BJ (cell line): ENCODE measurements at regions of chr11 and their contacts with region 1.

Region 1: DNA sequence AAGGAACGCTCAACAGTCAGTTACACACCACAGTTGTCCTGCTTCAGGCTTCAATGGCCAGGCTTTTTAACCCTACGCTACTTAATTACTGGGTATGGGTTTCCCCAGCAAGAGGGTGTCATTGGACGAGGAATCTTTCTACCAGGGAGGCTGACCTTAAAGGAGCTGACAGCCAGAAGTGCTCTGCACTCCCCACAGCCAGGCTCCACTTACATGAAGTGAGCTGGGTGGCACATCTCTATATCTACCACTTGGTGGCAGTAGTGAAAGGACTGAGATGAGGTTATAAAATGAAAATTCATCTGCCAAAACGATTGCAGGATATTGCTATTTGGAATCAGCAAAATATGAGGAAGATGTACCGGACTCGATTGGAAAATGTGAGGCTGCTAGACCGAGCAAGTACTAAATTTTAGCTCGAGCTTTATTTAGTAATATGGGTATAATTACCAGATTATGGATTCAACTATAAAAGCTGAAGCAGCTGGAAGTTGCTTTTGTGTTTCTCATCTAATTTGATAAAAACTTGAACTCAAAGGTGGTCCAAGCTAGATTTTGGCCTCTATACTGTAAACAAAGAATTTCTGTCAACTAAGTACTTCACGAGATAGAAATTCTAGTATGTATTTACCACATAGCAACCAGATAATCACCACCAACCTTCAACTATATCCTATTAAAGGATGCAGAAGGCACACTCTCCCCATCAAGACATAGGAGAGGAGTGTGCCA is 53.9 kb upstream of the CEP126 start:
- DNase-seq: no peak
- H3K4me3 ChIP-seq: no peak overlapping the region
- H3K27me3 ChIP-seq: no peaks in the 10 kb centered on the region
- CTCF ChIP-seq: peak; percentile 84

Region 2: DNA sequence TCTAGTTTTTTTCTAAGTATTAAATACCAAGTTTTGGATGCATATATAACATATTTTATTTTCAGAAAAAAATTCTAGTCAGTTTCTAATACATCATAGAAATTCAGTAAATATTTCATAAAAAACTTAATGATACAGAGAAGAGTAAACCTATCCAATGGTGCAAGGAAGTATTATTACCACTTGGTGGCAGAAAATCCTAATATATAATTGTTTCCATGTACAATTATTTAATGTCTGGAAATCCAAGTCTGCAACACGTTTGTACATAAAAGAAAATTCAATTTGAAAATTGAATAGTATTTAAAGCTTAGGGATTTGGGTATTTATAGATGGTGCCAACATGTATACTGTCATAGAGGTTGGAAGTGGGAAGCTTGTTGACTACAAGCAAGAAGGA is 404.1 kb before region 1 on chr11:
- CTCF ChIA-PET with region 1: interaction called, 13 read pairs
- POLR2A ChIA-PET with region 1: no interaction called
- DNase-seq: no peak
- H3K4me3 ChIP-seq: no peak overlapping the region
- H3K27me3 ChIP-seq: no peaks in the 10 kb centered on the region
- CTCF ChIP-seq: peak; percentile 33; the same call in 1 of the 2 replicates

Region 3: DNA sequence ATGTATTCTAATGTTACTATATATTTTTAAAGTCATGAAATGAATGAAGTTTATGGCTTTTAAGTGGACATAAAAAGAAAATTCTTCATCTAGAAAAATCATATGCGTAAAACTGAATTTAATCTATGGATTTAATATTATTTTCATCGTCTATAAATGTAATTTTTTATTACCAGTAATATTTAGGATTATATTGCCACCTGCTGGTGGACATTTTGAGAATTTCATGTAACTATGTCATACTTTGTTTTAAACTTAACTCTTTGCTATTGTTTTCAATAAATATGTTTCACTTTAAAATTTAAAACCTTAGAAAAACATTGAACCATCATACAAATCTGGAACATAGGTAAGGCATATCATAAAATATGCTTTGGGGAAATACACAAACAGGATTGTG is 12.6 kb before region 1 on chr11:
- CTCF ChIA-PET with region 1: interaction called, 14 read pairs
- POLR2A ChIA-PET with region 1: no interaction called
- DNase-seq: no peak
- H3K4me3 ChIP-seq: no peak overlapping the region
- H3K27me3 ChIP-seq: no peaks in the 10 kb centered on the region
- CTCF ChIP-seq: peak; percentile 22; the same call in 1 of the 2 replicates

Region 4: DNA sequence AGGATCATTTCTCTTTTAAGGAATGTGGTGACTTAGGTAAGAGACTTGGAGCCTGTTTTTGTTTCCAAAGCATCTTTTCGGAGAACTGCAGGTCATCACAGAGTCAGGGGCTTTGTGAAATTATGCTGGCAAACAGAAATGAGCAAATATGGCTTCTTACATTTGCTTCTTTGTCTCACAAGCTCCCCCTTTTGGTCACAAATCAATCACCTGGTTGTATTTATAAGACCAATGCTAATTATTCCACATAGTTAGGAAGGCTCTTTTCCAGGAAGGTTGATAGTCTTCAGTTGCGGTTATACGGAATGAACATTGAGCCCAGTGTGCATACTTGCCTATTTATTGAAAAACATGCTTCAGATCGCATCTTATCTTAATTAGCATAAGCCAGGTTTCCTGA is 19.4 kb after region 1 on chr11:
- CTCF ChIA-PET with region 1: interaction called, 59 read pairs
- POLR2A ChIA-PET with region 1: no interaction called
- DNase-seq: no peak
- H3K4me3 ChIP-seq: no peak overlapping the region
- H3K27me3 ChIP-seq: no peaks in the 10 kb centered on the region
- CTCF ChIP-seq: peak; percentile 49

Region 5: GRCh38 chr11:101914738-101915426 is 54.0 kb after region 1 on chr11 and contains the start of gene CEP126:
- CTCF ChIA-PET with region 1: interaction called, 13 read pairs
- POLR2A ChIA-PET with region 1: no interaction called
- DNase-seq: peak; percentile 78
- H3K4me3 ChIP-seq: peak within 1 kb of the TSS; percentile 60
- H3K27me3 ChIP-seq: no peaks in the 10 kb centered on the region
- CTCF ChIP-seq: peak; percentile 73
- polyA plus RNA-seq, gene CEP126: 1.5 and 2.9 TPM in 2 replicates

Region 6: DNA sequence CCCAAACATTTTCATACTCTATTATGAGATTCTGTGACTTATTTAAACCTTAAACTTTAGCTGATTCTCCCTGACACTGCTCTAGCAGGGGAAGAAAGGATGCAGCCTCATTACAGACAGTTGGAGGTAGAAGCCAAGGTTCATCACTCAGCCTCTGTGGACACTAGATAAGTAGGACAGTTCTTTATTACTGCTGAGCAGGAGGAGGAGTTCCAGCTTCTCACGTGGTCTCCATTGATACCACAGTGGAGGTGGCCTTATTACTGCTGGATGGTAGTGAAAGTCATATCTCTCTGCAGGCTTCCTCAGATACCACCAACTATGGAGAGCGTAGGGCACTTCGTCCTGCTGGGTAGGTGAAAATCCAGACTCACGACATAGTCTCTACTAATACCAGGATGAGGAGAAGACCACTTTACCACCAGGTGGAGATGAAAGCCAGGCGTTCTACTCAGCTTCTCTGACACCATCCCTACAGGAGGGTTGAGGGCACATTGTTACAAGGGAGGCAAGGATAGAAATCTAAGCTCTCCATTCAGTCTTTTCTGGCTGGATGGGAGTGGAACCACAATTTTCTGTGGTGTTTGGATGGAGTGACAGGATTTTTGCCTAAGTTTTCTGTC is 68.5 kb after region 1 on chr11:
- CTCF ChIA-PET with region 1: no interaction called
- POLR2A ChIA-PET with region 1: no interaction called
- DNase-seq: no peak
- H3K4me3 ChIP-seq: no peak overlapping the region
- H3K27me3 ChIP-seq: no peaks in the 10 kb centered on the region
- CTCF ChIP-seq: no peak

Region 7: GRCh38 chr11:101974255-101974654 is 113.4 kb after region 1 on chr11:
- CTCF ChIA-PET with region 1: interaction called, 43 read pairs
- POLR2A ChIA-PET with region 1: no interaction called
- DNase-seq: no peak
- H3K4me3 ChIP-seq: no peak overlapping the region
- H3K27me3 ChIP-seq: no peaks in the 10 kb centered on the region
- CTCF ChIP-seq: peak; percentile 40; the same call in 1 of the 2 replicates

Region 8: GRCh38 chr11:102007567-102008437 is 146.9 kb after region 1 on chr11:
- CTCF ChIA-PET with region 1: interaction called, 173 read pairs
- POLR2A ChIA-PET with region 1: no interaction called
- DNase-seq: peak; percentile 18
- H3K4me3 ChIP-seq: no peak overlapping the region
- H3K27me3 ChIP-seq: no peaks in the 10 kb centered on the region
- CTCF ChIP-seq: peak; percentile 32